ENCODE measurements at regions of chr6 and their contacts with region 1.

Region 1: GRCh38 chr6:68967549-68968300 is 332.6 kb downstream of the ADGRB3 start:
- DNase-seq: peak in 8 of 10 donors; percentile 38 to 59 (median 52)
- H3K4me3 ChIP-seq: peak overlapping the region in 2 of 59 donors; percentile 1 to 15
- H3K27ac ChIP-seq: peak overlapping the region in 34 of 59 donors; percentile 1 to 70 (median 32)
- H3K27me3 ChIP-seq: no peaks in the 10 kb centered on the region
- CTCF ChIP-seq: peak; percentile 70 to 97 (median 90)

Region 2: GRCh38 chr6:68173616-68174015 is 794.1 kb before region 1 on chr6:
- intact Hi-C with region 1: no loop called
- DNase-seq: no peak
- H3K4me3 ChIP-seq: no peak overlapping the region
- H3K27ac ChIP-seq: no peak overlapping the region
- H3K27me3 ChIP-seq: no peaks in the 10 kb centered on the region
- CTCF ChIP-seq: no peak

Region 3: GRCh38 chr6:68238097-68238601 is 729.6 kb before region 1 on chr6:
- intact Hi-C with region 1: no loop called
- DNase-seq: no peak
- H3K4me3 ChIP-seq: no peak overlapping the region
- H3K27ac ChIP-seq: no peak overlapping the region
- H3K27me3 ChIP-seq: no peaks in the 10 kb centered on the region
- CTCF ChIP-seq: no peak

Region 4: GRCh38 chr6:68559070-68559469 is 408.7 kb before region 1 on chr6:
- intact Hi-C with region 1: loop called in 1 of 2 experiments (anchors 5 kb)
- DNase-seq: peak in 1 of 10 donors; percentile 17
- H3K4me3 ChIP-seq: peak overlapping the region in 39 of 59 donors; percentile 0 to 53 (median 24)
- H3K27ac ChIP-seq: peak overlapping the region in 5 of 59 donors; percentile 1 to 55 (median 40)
- H3K27me3 ChIP-seq: no peaks in the 10 kb centered on the region
- CTCF ChIP-seq: peak in 55 of 56 donors; percentile 10 to 79 (median 53)

Region 5: DNA sequence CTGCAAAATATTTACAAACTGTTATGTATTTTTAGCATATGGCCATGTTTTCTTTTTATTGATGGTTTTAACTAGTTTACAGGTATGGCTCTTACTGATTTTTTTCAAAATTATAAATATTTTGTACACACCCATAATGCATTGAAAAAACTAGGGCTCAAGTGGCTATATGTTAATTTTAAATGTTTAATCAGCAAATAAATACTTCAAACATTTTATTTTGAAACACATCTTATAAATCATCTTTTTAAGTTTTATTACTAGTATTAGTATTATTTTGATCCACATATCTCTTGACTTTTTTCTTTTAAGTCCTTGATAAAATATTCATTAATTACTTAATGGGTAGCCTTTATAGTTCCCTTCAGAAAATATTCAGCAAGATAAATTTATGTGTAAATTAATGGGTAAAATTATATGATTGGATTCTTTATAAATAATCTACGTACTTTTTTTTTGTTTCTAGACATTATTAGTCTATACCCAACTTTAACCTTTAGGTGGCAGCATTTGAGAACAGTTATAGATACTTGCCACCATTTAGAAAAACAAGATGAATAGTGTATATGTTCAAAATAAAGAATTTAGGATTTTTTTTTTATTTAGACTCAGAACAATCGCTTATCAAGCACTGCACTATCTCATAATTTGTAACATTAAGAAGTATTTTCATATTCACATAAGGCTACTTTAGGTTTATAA is 90.8 kb before region 1 on chr6:
- intact Hi-C with region 1: loop called (anchors 5 to 10 kb)
- DNase-seq: no peak
- H3K4me3 ChIP-seq: no peak overlapping the region
- H3K27ac ChIP-seq: no peak overlapping the region
- H3K27me3 ChIP-seq: no peaks in the 10 kb centered on the region
- CTCF ChIP-seq: peak; percentile 24 to 77 (median 55)

Region 6: DNA sequence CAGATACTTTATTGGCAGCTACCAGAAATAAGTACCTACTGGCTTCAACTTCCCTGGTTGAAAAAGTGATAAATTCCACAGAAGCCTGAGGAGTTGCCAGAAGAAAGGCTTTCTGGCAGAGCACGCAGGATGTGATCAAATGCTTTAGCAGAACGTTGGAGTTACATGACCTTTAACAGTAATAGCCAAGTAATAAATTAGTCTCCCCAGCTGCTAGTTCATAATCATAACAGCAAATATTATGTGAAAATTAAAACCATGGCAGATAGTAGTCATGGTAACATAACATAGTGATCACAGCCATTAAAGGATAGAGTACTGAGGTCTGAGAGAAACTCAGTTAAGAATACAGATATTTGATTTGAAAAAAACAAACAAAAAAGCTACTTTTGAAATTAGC is 235.0 kb after region 1 on chr6:
- intact Hi-C with region 1: no loop called
- DNase-seq: no peak
- H3K4me3 ChIP-seq: no peak overlapping the region
- H3K27ac ChIP-seq: peak overlapping the region in 1 of 59 donors; percentile 1
- H3K27me3 ChIP-seq: no peaks in the 10 kb centered on the region
- CTCF ChIP-seq: no peak

Measured in dorsolateral prefrontal cortex (tissue), 120 donors.